Activated CD8-positive, alpha-beta memory T cell treated with anti-CD3 and anti-CD28 coated beads, Interleukin-2, amount 10 ng/mL, durations not matched to agents 7 days and 5 days (primary cell): ENCODE measurements at regions of chr1 and their contacts with region 1.

Region 1: GRCh38 chr1:26145041-26145959 is 13.6 kb upstream of the FAM110D start:
- DNase-seq: peak; percentile 78
- ATAC-seq: peak; percentile 90
- H3K4me3 Mint-ChIP-seq: no peak overlapping the region
- H3K27ac Mint-ChIP-seq: no peak overlapping the region
- H3K4me1 Mint-ChIP-seq: peaks cover 2% of the 10 kb centered on the region
- H3K27me3 Mint-ChIP-seq: peaks cover 29% of the 10 kb centered on the region

Region 2: GRCh38 chr1:26084844-26085243 is 60.5 kb before region 1 on chr1:
- CTCF ChIA-PET with region 1: interaction called, 10 read pairs
- DNase-seq: no peak
- ATAC-seq: no peak
- H3K4me3 Mint-ChIP-seq: no peak overlapping the region
- H3K27ac Mint-ChIP-seq: no peak overlapping the region
- H3K4me1 Mint-ChIP-seq: no peaks in the 10 kb centered on the region
- H3K27me3 Mint-ChIP-seq: peaks cover 27% of the 10 kb centered on the region

Region 3: DNA sequence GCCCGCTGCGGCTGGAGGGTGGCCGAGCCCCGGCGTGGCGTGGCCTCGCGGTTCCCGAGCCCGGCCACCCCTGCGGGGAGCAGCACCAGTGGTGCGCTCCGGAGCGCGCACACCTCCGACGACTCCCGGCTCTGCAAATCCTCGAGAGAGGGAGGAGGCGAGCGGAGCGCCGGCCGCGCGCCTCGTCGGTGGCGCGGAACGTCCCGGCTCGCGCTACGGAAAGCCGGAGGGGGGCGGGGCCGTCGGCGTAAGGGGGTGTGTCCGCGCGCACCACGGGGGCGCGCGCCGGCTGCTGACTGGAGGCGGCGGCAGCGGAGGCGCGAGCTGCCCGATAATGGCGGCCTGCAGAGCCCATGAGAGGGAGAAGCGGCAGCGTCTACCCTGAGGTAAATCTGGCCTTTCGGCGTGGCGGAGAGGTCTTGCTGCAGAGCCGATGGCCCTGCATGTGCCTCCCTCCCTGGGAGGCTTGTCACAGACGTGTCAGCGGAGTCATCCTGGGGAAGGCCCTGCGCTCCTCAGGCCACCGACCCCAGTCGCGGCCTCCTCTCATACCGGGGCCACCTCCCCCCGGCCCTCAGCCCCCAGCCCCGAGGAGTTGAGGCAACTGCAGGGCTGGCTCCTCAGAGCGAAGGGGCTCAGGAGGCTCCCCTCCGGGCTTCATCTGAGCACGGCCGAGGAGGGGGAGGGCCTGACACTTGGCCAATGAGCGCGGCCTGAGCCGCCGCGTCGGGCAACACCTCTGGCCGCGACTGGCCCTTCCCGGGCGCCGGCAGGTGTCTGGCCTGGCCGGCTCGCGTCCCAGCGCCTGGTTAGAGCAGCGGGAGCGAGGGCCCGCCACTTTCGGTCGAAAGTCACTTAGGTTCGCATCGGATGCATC is 33.5 kb before region 1 on chr1 and contains the start of gene PDIK1L:
- CTCF ChIA-PET with region 1: interaction called, 93 read pairs
- DNase-seq: peak; percentile 94
- ATAC-seq: peak; percentile 87
- H3K4me3 Mint-ChIP-seq: peak within 1 kb of the TSS; percentile 91
- H3K27ac Mint-ChIP-seq: peak within 1 kb of the TSS; percentile 94
- H3K4me1 Mint-ChIP-seq: peaks cover 30% of the 10 kb centered on the region
- H3K27me3 Mint-ChIP-seq: no peaks in the 10 kb centered on the region
- total RNA-seq, gene PDIK1L: 18.3 to 20.2 TPM

Region 4: GRCh38 chr1:26132128-26132833 is 13.0 kb before region 1 on chr1:
- CTCF ChIA-PET with region 1: interaction called, 69 read pairs
- DNase-seq: no peak
- ATAC-seq: no peak
- H3K4me3 Mint-ChIP-seq: no peak overlapping the region
- H3K27ac Mint-ChIP-seq: no peak overlapping the region
- H3K4me1 Mint-ChIP-seq: peaks cover 12% of the 10 kb centered on the region
- H3K27me3 Mint-ChIP-seq: peaks cover 6% of the 10 kb centered on the region

Region 5: DNA sequence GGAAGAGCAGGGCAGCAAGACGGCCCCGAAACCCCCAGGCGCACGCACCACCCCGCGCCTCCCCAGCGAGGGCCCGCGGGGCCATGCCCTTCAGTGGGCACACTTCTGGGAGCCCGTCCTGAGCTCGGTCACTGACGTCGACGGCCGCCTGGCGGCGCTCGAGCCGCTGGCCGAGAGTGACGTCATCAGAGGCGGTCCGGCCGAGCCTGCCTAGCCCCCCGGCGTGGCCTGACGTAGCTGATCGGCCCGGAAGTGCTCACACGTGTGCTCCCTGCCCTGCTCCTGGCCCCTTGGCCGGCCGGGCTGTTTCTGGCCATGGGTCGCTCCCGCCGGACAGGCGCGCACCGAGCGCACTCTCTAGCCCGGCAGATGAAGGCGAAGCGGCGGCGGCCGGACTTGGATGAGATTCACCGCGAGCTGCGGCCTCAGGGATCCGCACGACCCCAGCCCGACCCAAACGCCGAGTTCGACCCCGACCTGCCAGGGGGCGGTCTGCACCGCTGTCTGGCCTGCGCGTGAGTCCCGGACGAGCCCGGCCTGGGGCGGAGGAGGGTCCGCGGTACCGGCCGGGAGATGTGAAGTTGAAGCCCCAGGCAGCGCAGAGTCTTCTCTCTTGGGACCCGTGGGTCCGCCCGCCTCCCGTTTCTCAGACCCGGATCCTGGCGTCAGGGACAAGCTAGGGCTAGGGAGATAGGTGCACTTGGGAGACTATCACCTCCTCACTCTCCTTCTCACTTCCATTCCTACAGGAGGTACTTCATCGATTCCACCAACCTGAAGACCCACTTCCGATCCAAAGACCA is 24.6 kb after region 1 on chr1 and contains the start of gene ZNF593:
- CTCF ChIA-PET with region 1: interaction called, 25 read pairs
- DNase-seq: peak; percentile 92
- ATAC-seq: peak; percentile 97
- H3K4me3 Mint-ChIP-seq: peak within 1 kb of the TSS; percentile 89
- H3K27ac Mint-ChIP-seq: peak within 1 kb of the TSS; percentile 88
- H3K4me1 Mint-ChIP-seq: peaks cover 26% of the 10 kb centered on the region
- H3K27me3 Mint-ChIP-seq: peaks cover 11% of the 10 kb centered on the region
- total RNA-seq, gene ZNF593: 40.1 to 48.1 TPM